Dendritic cell treated with granulocyte-macrophage colony-stimulating factor and Interleukin-4, amounts not matched to agents 40 ng/mL and 50 ng/mL, for 4 days (primary cell): ENCODE measurements at regions of chr1 and their contacts with region 1.

Region 1: DNA sequence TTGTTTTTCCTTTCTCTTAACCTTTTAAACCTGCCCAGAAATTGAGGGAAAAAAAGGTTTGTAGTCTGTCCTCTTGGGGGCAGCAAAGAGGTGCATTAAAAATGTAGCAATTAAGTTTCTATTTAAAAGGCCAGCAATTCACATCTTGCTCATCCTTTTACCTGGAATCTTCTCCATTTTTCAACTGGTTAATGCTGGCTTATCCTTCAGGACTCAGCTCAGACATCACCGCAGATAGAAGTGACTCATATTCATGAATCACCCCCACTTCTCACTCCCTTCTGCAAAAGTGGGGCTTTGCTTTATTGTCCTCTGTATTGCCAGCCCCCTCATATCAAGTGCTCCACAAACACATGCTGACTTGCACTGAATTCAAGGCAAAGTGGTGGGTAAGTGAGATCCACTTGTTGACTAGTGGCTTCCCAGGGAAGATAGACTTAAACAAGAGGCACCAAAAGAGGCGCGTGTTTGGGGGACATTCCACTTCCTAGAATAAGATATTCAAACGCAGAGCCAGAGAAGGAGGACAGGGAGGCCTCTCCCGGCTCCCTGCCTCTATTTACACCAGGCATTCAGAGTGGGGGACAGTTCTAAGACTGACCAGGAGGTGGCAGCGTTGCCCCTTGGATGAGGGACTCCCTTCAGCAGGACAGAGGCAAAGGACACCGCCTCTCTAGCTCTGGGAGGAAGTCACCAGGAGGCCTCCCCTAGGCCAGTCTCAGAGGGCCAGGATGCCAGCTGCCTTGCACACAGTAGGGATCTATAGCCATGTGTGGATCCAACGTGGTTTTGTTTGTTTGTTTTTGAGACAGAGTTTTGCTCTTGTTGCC is 23.2 kb upstream of the ZNF648 start:
- H3K4me3 Mint-ChIP-seq: no peak overlapping the region
- H3K27ac Mint-ChIP-seq: no peak overlapping the region
- H3K4me1 Mint-ChIP-seq: peaks cover 38% of the 10 kb centered on the region
- H3K27me3 Mint-ChIP-seq: no peaks in the 10 kb centered on the region

Region 2: GRCh38 chr1:182143154-182143657 is 58.5 kb after region 1 on chr1:
- intact Hi-C with region 1: loop called (anchors 1 kb)
- H3K4me3 Mint-ChIP-seq: peak overlapping the region; percentile 39
- H3K27ac Mint-ChIP-seq: peak overlapping the region; percentile 98
- H3K4me1 Mint-ChIP-seq: peaks cover 47% of the 10 kb centered on the region
- H3K27me3 Mint-ChIP-seq: no peaks in the 10 kb centered on the region

Region 3: DNA sequence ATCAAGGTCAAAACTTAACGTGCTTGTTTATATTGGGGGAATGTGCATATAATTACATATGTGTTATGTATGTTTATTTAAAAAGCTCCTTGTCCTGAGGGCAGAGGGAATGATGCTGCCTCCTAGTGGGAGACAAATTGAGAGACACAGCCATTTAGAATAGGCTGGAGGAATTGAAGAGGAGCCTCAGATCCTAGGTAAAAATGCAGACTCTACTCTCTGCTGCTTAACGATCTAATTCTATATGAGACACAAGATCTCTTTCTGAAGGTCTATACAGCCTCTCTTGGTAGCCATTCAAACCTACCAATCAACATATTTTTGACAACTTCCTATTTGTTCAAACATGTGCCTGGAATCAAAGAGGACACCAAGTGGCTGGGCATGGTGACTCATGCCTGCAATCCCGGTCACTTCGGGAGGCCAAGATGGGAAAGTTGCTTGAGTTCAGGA is 113.4 kb after region 1 on chr1:
- intact Hi-C with region 1: loop called (anchors 5 kb)
- H3K4me3 Mint-ChIP-seq: no peak overlapping the region
- H3K27ac Mint-ChIP-seq: peak overlapping the region; percentile 73
- H3K4me1 Mint-ChIP-seq: peaks cover 30% of the 10 kb centered on the region
- H3K27me3 Mint-ChIP-seq: no peaks in the 10 kb centered on the region

Region 4: GRCh38 chr1:182391362-182392044 is 306.8 kb after region 1 on chr1 and contains the start of gene GLUL:
- intact Hi-C with region 1: loop called (anchors 1 kb)
- H3K4me3 Mint-ChIP-seq: peak within 1 kb of the TSS; percentile 100
- H3K27ac Mint-ChIP-seq: peak within 1 kb of the TSS; percentile 100
- H3K4me1 Mint-ChIP-seq: peaks cover 68% of the 10 kb centered on the region
- H3K27me3 Mint-ChIP-seq: no peaks in the 10 kb centered on the region

Region 5: GRCh38 chr1:182595641-182596240 is 511.0 kb after region 1 on chr1:
- intact Hi-C with region 1: loop called (anchors 5 kb)
- H3K4me3 Mint-ChIP-seq: no peak overlapping the region
- H3K27ac Mint-ChIP-seq: no peak overlapping the region
- H3K4me1 Mint-ChIP-seq: peaks cover 25% of the 10 kb centered on the region
- H3K27me3 Mint-ChIP-seq: peaks cover 8% of the 10 kb centered on the region

Region 6: DNA sequence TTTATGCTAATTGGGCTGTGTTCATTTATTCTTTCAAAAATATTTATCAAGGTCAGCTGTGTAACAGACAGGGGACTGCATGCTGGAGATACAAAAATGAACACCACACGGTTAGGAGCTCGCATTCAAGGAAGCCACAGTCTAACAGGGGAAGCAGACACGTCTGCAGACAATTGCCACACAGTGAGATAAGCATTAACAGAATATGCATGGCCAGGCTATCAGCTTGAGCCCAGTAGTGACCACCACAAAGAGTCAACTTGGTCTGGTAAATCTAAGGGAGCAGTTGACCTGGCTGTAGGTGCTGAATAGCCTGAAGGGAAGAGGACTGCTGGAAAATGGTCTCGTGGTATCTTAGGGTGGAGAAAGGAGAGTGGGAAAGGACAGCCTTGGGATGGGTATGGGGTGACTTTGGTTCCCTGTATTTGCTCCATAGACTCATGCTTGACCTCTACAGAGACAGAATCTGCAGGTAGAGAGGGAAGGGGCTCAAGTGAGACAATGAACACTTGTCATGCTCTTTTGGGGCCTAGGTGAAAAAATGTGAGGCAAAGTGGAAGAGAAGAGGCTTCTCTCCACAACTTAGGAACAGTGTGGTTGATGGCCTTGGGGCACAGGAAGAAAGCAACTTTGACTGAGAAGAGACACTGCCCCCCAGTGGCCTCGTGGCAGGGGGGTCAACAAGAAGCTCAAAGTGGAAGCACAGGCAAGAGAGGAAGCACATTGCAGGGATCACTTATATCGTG is 697.3 kb after region 1 on chr1:
- intact Hi-C with region 1: loop called (anchors 5 kb)
- H3K4me3 Mint-ChIP-seq: no peak overlapping the region
- H3K27ac Mint-ChIP-seq: no peak overlapping the region
- H3K4me1 Mint-ChIP-seq: peaks cover 17% of the 10 kb centered on the region
- H3K27me3 Mint-ChIP-seq: no peaks in the 10 kb centered on the region